ENCODE measurements at regions of chr6 and their contacts with region 1.

Region 1: GRCh38 chr6:107866606-107867301 is 42.6 kb upstream of the SCML4 start:
- DNase-seq: peak in 1 of 2 donors; percentile 77
- ATAC-seq: peak in 2 of 3 donors; percentile 68
- H3K4me3 ChIP-seq: no peak overlapping the region
- H3K4me3 Mint-ChIP-seq: peak overlapping the region; percentile 35
- H3K27ac ChIP-seq: no peak overlapping the region
- H3K27ac Mint-ChIP-seq: no peak overlapping the region
- H3K4me1 ChIP-seq: no peaks in the 10 kb centered on the region
- H3K4me1 Mint-ChIP-seq: peaks cover 9 to 13% of the 10 kb centered on the region in 2 donors
- H3K27me3 ChIP-seq: no peaks in the 10 kb centered on the region
- H3K27me3 Mint-ChIP-seq: no peaks in the 10 kb centered on the region
- CTCF ChIP-seq: peak; percentile 67

Region 2: GRCh38 chr6:107655245-107655644 is 211.5 kb before region 1 on chr6:
- intact Hi-C with region 1: no loop called
- DNase-seq: no peak
- ATAC-seq: no peak
- H3K4me3 ChIP-seq: no peak overlapping the region
- H3K4me3 Mint-ChIP-seq: no peak overlapping the region
- H3K27ac ChIP-seq: no peak overlapping the region
- H3K27ac Mint-ChIP-seq: no peak overlapping the region
- H3K4me1 ChIP-seq: peaks cover 18% of the 10 kb centered on the region
- H3K4me1 Mint-ChIP-seq: peaks cover 0 to 25% of the 10 kb centered on the region in 2 donors
- H3K27me3 ChIP-seq: no peaks in the 10 kb centered on the region
- H3K27me3 Mint-ChIP-seq: peaks cover 8 to 29% of the 10 kb centered on the region in 2 donors
- CTCF ChIP-seq: no peak

Region 3: DNA sequence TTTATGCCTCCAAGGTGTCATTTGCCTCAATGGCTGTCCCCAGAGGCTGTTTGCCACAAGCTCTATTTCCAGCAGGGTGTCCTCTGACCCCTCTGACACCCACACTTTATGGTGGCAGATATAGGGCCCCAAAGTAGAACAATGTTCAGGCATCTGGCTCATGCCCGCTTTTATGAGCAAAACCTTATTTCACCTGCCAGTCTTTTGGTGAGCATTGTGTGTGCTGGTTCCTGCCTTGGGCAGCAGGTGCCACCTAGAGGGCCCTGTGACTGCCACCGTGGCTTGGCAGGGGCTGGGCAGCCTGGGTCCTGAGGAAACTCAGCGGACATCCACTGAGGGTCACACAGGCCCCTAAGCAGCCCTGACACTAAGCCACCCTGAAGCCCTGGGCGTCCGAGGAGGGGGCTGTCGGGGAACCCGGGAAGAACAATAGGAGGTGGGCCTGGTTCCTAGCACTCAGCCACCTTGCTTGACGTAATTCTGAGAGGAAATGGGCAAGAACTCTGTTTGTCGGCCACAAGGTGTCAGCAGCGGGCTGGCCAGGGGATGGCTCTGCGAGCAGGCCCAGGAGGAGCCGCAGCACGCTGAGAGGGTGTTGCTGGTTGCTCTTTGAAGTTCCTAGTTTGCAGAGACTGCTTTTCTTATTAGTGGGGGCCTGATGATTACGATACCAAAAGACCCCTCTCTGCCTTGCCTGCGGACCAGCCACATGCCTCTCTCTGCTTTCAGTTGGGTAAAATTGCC is 191.6 kb before region 1 on chr6:
- intact Hi-C with region 1: loop called (anchors 1 kb)
- DNase-seq: peak; percentile 81 to 94
- ATAC-seq: peak; percentile 92 to 99 (median 99)
- H3K4me3 ChIP-seq: no peak overlapping the region
- H3K4me3 Mint-ChIP-seq: no peak overlapping the region
- H3K27ac ChIP-seq: peak overlapping the region; percentile 20
- H3K27ac Mint-ChIP-seq: peak overlapping the region in 1 of 2 donors; percentile 78
- H3K4me1 ChIP-seq: peaks cover 21% of the 10 kb centered on the region
- H3K4me1 Mint-ChIP-seq: peaks cover 8 to 11% of the 10 kb centered on the region in 2 donors
- H3K27me3 ChIP-seq: no peaks in the 10 kb centered on the region
- H3K27me3 Mint-ChIP-seq: peaks cover 0 to 6% of the 10 kb centered on the region in 2 donors
- CTCF ChIP-seq: peak; percentile 90

Region 4: GRCh38 chr6:107786709-107787588 is 79.8 kb before region 1 on chr6:
- intact Hi-C with region 1: no loop called
- DNase-seq: peak in 1 of 2 donors; percentile 70
- ATAC-seq: peak; percentile 80 to 87 (median 85)
- H3K4me3 ChIP-seq: no peak overlapping the region
- H3K4me3 Mint-ChIP-seq: peak overlapping the region; percentile 77
- H3K27ac ChIP-seq: peak overlapping the region; percentile 50
- H3K27ac Mint-ChIP-seq: peak overlapping the region; percentile 84 to 87
- H3K4me1 ChIP-seq: peaks cover 65% of the 10 kb centered on the region
- H3K4me1 Mint-ChIP-seq: peaks cover 61 to 70% of the 10 kb centered on the region in 2 donors
- H3K27me3 ChIP-seq: no peaks in the 10 kb centered on the region
- H3K27me3 Mint-ChIP-seq: no peaks in the 10 kb centered on the region
- CTCF ChIP-seq: no peak